Adrenal gland (tissue), 19 donors: ENCODE measurements at regions of chr12 and their contacts with region 1.

Region 1: DNA sequence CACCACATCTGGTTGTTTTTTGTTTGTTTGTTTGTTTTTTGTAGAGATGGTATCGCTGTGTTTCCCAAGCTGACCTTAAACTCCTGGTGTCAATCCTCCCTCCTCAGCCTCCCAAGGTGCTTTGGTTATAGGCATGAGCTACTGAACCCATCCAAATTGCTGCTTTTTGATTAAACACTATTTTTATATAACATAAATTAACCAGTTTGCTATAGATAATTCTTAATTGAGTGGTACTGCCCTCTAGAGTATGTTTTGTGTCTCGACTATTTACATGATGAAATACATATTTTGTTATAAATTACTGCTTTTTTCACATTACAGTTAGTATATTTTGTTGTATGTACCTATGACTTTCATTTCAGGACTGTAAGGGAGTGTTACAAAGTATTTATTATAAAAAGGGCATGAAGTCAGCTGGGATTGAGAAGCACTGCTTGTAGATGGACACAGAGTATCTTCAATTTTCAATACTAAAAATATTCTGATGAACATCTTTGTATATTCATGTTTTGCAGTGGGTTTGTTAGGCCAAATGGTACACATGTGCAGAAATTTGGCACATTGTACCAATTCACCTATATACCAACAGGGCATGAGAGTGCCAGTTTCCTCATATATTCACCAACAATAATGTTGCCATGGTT is 14.9 kb upstream of the SCAF11 start:
- DNase-seq: no peak
- H3K4me3 ChIP-seq: no peak overlapping the region
- H3K27ac ChIP-seq: no peak overlapping the region
- H3K4me1 ChIP-seq: no peaks in the 10 kb centered on the region
- H3K27me3 ChIP-seq: no peaks in the 10 kb centered on the region
- CTCF ChIP-seq: peak; percentile 29 to 60 (median 46)
- POLR2A ChIP-seq: no peak

Region 2: GRCh38 chr12:45762185-45763110 is 242.8 kb before region 1 on chr12:
- intact Hi-C with region 1: loop called in 1 of 2 experiments (anchors 10 kb)
- DNase-seq: peak in 1 of 7 donors; percentile 21
- H3K4me3 ChIP-seq: no peak overlapping the region
- H3K27ac ChIP-seq: no peak overlapping the region
- H3K4me1 ChIP-seq: peaks cover 0 to 28% of the 10 kb centered on the region in 2 donors
- H3K27me3 ChIP-seq: no peaks in the 10 kb centered on the region
- CTCF ChIP-seq: peak; percentile 30 to 59 (median 48)
- POLR2A ChIP-seq: no peak